CD8-positive, alpha-beta T cell (primary cell): ENCODE measurements at regions of chr3 and their contacts with region 1.

Region 1: GRCh38 chr3:183884427-183885296 is at the start of gene PARL:
- DNase-seq: peak; percentile 93 to 98 (median 96)
- ATAC-seq: peak; percentile 100
- H3K4me3 ChIP-seq: peak within 1 kb of the TSS; percentile 84 to 88
- H3K4me3 Mint-ChIP-seq: peak within 1 kb of the TSS; percentile 97
- H3K27ac ChIP-seq: peak within 1 kb of the TSS; percentile 61 to 70
- H3K27ac Mint-ChIP-seq: peak within 1 kb of the TSS; percentile 95
- H3K4me1 ChIP-seq: peaks cover 24% of the 10 kb centered on the region
- H3K4me1 Mint-ChIP-seq: peaks cover 42% of the 10 kb centered on the region
- H3K27me3 ChIP-seq: no peaks in the 10 kb centered on the region
- H3K27me3 Mint-ChIP-seq: no peaks in the 10 kb centered on the region
- CTCF ChIP-seq: peak; percentile 89
- total RNA-seq, gene PARL: 43.8 to 47.0 TPM

Region 2: DNA sequence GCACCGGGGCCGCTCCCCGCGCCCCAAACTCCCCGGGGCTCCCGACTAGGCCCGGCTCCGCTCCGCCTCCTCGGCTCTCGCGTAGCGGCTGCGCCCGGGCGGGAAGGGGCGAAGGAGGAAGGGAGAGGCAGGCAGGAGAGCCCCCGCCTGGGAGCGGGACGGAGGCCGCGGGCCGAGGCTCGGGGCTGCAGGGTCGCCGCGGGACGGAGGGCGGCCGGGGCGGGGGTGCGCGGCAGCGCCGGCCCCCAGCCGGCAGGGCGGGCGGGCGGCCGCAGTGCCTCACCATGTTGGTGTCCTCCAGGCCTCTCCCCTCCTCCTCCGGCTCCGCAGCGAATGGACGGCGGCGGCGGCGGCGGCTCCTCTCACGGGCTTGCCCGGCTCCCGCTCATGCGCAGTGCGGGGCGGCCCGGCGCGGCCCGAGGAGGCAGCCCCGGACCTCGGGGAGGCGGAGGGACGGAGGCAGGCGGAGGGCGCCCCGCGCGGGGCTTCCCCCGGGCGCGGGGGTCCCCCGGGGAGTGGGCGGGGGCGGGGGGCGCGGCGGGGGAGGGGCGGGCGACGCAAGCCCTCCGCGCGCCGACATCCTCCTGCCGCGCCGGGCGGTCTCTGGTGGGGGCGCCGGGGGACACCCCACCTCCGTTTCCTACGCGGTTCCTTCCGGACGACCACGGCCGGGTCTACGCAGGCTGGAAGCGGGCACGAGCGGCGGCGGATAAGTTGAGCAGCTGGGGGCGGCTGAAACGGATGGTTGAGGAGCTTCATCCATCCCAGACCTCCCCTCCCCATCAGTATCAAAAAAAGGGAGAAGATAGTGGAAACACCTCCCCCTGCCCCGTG is 904.2 kb before region 1 on chr3 and contains the start of gene DCUN1D1:
- CTCF ChIA-PET with region 1: no interaction called
- POLR2A ChIA-PET with region 1: no interaction called
- intact Hi-C with region 1: loop called in 1 of 2 experiments (anchors 5 kb)
- DNase-seq: peak; percentile 71 to 93 (median 85)
- ATAC-seq: peak; percentile 83
- H3K4me3 ChIP-seq: peak within 1 kb of the TSS; percentile 78 to 90
- H3K4me3 Mint-ChIP-seq: peak within 1 kb of the TSS; percentile 86
- H3K27ac ChIP-seq: peak within 1 kb of the TSS; percentile 63 to 80
- H3K27ac Mint-ChIP-seq: peak within 1 kb of the TSS; percentile 90
- H3K4me1 ChIP-seq: peaks cover 25% of the 10 kb centered on the region
- H3K4me1 Mint-ChIP-seq: peaks cover 39% of the 10 kb centered on the region
- H3K27me3 ChIP-seq: no peaks in the 10 kb centered on the region
- H3K27me3 Mint-ChIP-seq: no peaks in the 10 kb centered on the region
- CTCF ChIP-seq: no peak
- total RNA-seq, gene DCUN1D1: 45.3 to 50.4 TPM

Region 3: GRCh38 chr3:183635431-183636220 is 249.0 kb before region 1 on chr3 and contains the start of gene KLHL24:
- CTCF ChIA-PET with region 1: no interaction called
- POLR2A ChIA-PET with region 1: interaction called, 7 read pairs
- intact Hi-C with region 1: loop called (anchors 10 kb)
- DNase-seq: peak; percentile 82 to 95 (median 90)
- ATAC-seq: peak; percentile 73
- H3K4me3 ChIP-seq: peak within 1 kb of the TSS; percentile 88 to 97
- H3K4me3 Mint-ChIP-seq: peak within 1 kb of the TSS; percentile 94
- H3K27ac ChIP-seq: peak within 1 kb of the TSS; percentile 94 to 99
- H3K27ac Mint-ChIP-seq: peak within 1 kb of the TSS; percentile 97
- H3K4me1 ChIP-seq: peaks cover 25% of the 10 kb centered on the region
- H3K4me1 Mint-ChIP-seq: peaks cover 34% of the 10 kb centered on the region
- H3K27me3 ChIP-seq: no peaks in the 10 kb centered on the region
- H3K27me3 Mint-ChIP-seq: no peaks in the 10 kb centered on the region
- CTCF ChIP-seq: no peak
- total RNA-seq, gene KLHL24: 180 to 181 TPM

Region 4: DNA sequence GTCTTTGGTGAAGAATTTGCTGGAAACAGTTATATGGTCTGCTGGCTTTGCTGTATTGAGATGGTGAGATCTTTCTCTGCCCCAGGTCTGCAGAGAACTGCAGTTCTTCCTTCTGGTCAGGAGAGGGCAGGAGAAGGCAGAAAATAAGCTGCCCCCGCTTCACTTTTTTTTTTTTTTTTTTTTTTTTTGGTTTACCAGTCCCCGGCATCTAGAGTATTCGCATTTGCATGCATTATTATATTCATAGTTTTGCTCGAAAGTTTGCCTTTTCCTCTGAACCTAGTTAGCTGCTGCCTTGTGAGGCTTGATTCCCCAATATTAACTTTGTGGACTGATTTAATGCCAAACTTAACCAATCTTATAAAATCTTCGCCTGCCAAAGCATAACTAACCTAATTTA is 10.6 kb after region 1 on chr3:
- CTCF ChIA-PET with region 1: interaction called, 16 read pairs
- POLR2A ChIA-PET with region 1: no interaction called
- intact Hi-C with region 1: no loop called
- DNase-seq: peak in 7 of 9 experiments; percentile 24 to 72 (median 39)
- ATAC-seq: peak; percentile 97
- H3K4me3 ChIP-seq: no peak overlapping the region
- H3K4me3 Mint-ChIP-seq: no peak overlapping the region
- H3K27ac ChIP-seq: no peak overlapping the region
- H3K27ac Mint-ChIP-seq: no peak overlapping the region
- H3K4me1 ChIP-seq: no peaks in the 10 kb centered on the region
- H3K4me1 Mint-ChIP-seq: no peaks in the 10 kb centered on the region
- H3K27me3 ChIP-seq: no peaks in the 10 kb centered on the region
- H3K27me3 Mint-ChIP-seq: peaks cover 29% of the 10 kb centered on the region
- CTCF ChIP-seq: peak; percentile 70

Region 5: GRCh38 chr3:183912895-183913579 is 28.4 kb after region 1 on chr3:
- CTCF ChIA-PET with region 1: no interaction called
- POLR2A ChIA-PET with region 1: no interaction called
- intact Hi-C with region 1: no loop called
- DNase-seq: no peak
- ATAC-seq: no peak
- H3K4me3 ChIP-seq: no peak overlapping the region
- H3K4me3 Mint-ChIP-seq: no peak overlapping the region
- H3K27ac ChIP-seq: no peak overlapping the region
- H3K27ac Mint-ChIP-seq: no peak overlapping the region
- H3K4me1 ChIP-seq: no peaks in the 10 kb centered on the region
- H3K4me1 Mint-ChIP-seq: no peaks in the 10 kb centered on the region
- H3K27me3 ChIP-seq: no peaks in the 10 kb centered on the region
- H3K27me3 Mint-ChIP-seq: no peaks in the 10 kb centered on the region
- CTCF ChIP-seq: no peak

Region 6: DNA sequence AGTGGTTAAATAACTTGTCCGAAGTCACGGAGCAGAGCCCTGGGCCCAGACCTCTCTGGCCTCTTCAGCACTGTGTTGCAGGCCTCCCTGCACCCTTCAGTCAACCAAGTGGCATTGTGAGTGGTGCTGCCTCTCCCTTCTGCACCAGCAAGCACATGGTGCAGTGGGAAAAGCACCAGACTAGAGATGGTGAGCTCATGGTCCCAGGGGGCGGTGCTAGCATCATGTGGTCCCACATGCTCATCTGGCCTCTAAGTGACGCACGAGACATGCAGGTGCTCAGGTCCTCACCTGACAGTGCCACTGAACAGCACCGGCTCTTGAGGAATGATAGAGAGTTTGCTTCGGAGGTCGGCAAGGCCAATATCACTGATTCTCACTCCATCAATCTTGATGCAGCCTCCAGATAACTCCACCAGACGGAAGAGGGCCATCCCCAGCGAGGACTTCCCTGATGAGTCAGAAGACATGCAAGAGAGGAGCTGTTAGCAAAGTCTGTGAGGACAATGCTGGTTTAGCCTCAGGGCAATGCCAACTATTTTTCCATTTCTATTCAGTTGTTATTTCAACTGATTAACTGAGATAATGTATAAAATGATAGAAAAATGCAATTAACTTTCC is 53.1 kb after region 1 on chr3:
- CTCF ChIA-PET with region 1: no interaction called
- POLR2A ChIA-PET with region 1: no interaction called
- intact Hi-C with region 1: no loop called
- DNase-seq: no peak
- ATAC-seq: no peak
- H3K4me3 ChIP-seq: no peak overlapping the region
- H3K4me3 Mint-ChIP-seq: no peak overlapping the region
- H3K27ac ChIP-seq: no peak overlapping the region
- H3K27ac Mint-ChIP-seq: no peak overlapping the region
- H3K4me1 ChIP-seq: no peaks in the 10 kb centered on the region
- H3K4me1 Mint-ChIP-seq: no peaks in the 10 kb centered on the region
- H3K27me3 ChIP-seq: no peaks in the 10 kb centered on the region
- H3K27me3 Mint-ChIP-seq: no peaks in the 10 kb centered on the region
- CTCF ChIP-seq: no peak

Region 7: DNA sequence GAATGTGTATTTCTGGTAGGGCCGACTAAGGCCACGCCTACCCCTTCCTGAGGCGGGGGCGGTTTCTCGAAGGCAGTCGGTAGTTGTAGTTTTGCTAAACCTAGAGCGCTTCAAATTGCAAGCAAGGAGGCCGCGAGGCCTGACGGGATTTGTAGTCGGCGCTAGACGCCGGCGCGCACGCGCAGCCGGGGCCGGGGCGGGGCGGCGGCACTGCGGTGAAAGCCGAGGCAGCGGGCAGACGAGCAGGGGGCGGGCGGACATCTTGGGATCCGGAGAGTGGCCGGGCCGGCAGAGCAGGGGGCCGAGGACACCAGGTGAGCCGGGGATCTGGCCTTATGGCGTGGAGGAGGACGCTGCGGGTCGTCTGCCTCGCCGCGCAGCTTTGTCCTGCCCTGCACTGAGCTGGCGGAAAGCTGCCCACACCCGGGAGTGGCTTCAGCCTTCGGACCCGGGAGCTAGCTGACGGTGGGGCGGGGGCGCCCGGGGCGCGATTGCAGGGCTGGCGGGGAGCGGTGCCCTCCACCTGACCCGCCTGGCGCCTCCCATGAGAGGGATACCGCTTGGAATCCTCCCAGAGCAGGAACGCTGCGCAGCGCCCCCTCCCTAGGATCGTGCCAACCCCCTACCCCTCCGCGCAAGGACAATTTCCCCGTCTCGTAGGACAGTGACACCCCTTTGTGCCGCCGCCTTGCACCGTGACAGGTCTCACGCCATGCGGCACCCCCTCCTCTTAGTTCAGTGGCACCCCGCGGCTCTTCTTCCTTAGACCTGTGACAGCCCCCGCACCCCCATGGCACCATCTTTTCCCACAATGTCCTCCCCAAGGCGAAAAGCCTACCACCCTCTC is 290.2 kb after region 1 on chr3 and contains the start of gene AP2M1:
- CTCF ChIA-PET with region 1: no interaction called
- POLR2A ChIA-PET with region 1: no interaction called
- intact Hi-C with region 1: loop called (anchors 1 to 10 kb)
- DNase-seq: peak; percentile 96 to 99 (median 97)
- ATAC-seq: peak; percentile 98
- H3K4me3 ChIP-seq: peak within 1 kb of the TSS; percentile 83 to 93
- H3K4me3 Mint-ChIP-seq: peak within 1 kb of the TSS; percentile 96
- H3K27ac ChIP-seq: peak within 1 kb of the TSS; percentile 71 to 73
- H3K27ac Mint-ChIP-seq: peak within 1 kb of the TSS; percentile 90
- H3K4me1 ChIP-seq: peaks cover 26% of the 10 kb centered on the region
- H3K4me1 Mint-ChIP-seq: peaks cover 32% of the 10 kb centered on the region
- H3K27me3 ChIP-seq: no peaks in the 10 kb centered on the region
- H3K27me3 Mint-ChIP-seq: no peaks in the 10 kb centered on the region
- CTCF ChIP-seq: no peak
- total RNA-seq, gene AP2M1: 121 to 123 TPM

Region 8: DNA sequence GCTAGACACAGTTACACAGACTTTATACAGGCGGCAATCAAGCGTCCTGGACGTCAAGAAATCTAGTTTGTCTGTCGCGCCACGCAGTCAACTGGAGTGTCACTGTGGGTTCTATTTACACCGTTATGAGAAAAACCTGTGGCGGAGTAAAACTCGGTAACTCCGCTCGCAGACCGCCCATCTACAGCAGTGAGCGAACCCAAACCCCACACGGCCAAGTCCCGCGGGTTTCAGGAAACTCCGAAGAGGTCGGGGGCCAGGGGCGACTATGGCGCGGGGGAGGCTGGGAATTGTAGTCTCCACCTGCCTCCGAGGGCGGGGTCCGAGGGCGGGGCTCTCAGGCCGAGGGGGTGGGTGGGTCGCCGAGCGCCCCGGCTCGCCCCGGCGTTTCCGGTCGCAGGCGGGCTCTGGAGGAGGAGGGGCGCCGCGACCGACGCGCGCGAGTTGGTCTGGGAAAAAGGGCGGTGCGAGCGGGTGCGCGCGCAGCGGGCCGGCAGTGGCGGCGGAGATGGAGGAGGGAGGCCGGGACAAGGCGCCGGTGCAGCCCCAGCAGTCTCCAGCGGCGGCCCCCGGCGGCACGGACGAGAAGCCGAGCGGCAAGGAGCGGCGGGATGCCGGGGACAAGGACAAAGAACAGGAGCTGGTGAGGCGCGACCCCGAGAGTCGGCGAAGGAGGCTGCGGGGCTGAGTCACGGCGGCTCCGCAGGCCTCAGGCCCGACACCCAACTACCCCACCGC is 414.3 kb after region 1 on chr3 and contains the start of gene PSMD2:
- CTCF ChIA-PET with region 1: no interaction called
- POLR2A ChIA-PET with region 1: no interaction called
- intact Hi-C with region 1: loop called in 1 of 2 experiments (anchors 1 kb)
- DNase-seq: peak; percentile 96 to 99 (median 98)
- ATAC-seq: peak; percentile 93
- H3K4me3 ChIP-seq: peak within 1 kb of the TSS; percentile 74 to 89
- H3K4me3 Mint-ChIP-seq: peak within 1 kb of the TSS; percentile 93
- H3K27ac ChIP-seq: peak within 1 kb of the TSS; percentile 64 to 70
- H3K27ac Mint-ChIP-seq: peak within 1 kb of the TSS; percentile 91
- H3K4me1 ChIP-seq: peaks cover 10% of the 10 kb centered on the region
- H3K4me1 Mint-ChIP-seq: peaks cover 32% of the 10 kb centered on the region
- H3K27me3 ChIP-seq: no peaks in the 10 kb centered on the region
- H3K27me3 Mint-ChIP-seq: no peaks in the 10 kb centered on the region
- CTCF ChIP-seq: no peak
- total RNA-seq, gene PSMD2: 168 to 174 TPM